ENCODE measurements at regions of chr5 and their contacts with region 1.

Region 1: GRCh38 chr5:60960591-60960990 is 15.6 kb downstream of the NDUFAF2 start:
- DNase-seq: no peak
- ATAC-seq: peak; percentile 38; the same call in 1 of the 3 replicates
- H3K4me3 ChIP-seq: no peak overlapping the region
- H3K27ac ChIP-seq: no peak overlapping the region
- H3K4me1 ChIP-seq: no peaks in the 10 kb centered on the region; the same call in 1 of the 2 replicates
- H3K27me3 ChIP-seq: no peaks in the 10 kb centered on the region
- CTCF ChIP-seq: peak; percentile 42 to 55 (median 48)
- EP300 ChIP-seq: no peak
- POLR2A ChIP-seq: no peak
- RAD21 ChIP-seq: peak; percentile 56

Region 2: DNA sequence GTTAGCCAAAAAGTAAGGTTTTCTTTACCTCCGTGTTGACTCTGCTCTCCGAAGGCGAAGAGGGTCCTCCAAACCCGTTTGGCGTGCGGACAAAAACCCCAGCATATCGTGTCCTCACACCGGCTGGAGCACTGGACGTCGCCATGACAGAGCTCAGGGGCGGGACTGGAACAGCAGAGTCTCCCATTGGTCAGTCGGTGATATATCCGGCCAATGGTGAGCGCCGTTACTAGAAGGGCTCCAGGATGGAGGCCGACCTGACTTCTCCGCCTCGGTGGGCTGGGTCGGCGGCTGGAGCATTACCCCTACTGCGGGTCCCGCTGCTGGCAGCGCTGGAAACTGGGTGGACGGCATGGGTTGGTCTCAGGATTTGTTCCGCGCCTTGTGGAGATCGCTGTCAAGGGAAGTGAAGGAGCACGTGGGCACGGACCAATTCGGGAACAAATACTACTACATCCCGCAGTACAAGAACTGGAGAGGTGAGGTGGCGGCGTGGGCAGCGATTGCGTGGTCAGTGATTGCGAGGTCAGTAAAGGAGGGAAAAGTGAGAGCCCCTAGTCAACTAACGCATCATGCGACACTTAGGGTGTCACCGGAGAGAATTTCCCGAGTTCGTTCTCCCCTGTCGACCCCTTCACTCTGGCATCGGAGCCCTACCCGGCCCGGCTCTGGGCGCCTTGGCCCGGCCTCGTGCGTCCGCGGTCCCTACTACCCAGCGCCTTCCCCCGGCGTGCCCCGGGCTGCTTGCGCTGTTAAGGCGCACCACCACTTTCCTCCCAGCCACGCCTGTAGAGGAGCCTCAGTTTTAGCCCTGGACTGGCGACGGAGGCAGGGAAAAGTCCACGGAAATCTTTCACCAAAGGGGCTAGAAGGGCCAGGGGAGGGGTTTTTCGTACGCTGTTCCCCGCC is 15.4 kb before region 1 on chr5 and contains the starts of genes ERCC8 and NDUFAF2:
- CTCF ChIA-PET with region 1: interaction called, 18 read pairs
- POLR2A ChIA-PET with region 1: no interaction called
- RAD21 ChIA-PET with region 1: interaction called, 6 read pairs
- SMC1A ChIA-PET with region 1: interaction called, 6 read pairs
- in situ Hi-C with region 1: no loop called
- intact Hi-C with region 1: no loop called
- DNase-seq: peak; percentile 73
- ATAC-seq: peak; percentile 98
- H3K4me3 ChIP-seq: peak within 1 kb of the TSS; percentile 98
- H3K27ac ChIP-seq: peak within 1 kb of the TSS; percentile 83
- H3K4me1 ChIP-seq: no peaks in the 10 kb centered on the region
- H3K27me3 ChIP-seq: no peaks in the 10 kb centered on the region
- CTCF ChIP-seq: no peak
- EP300 ChIP-seq: no peak
- POLR2A ChIP-seq: peak; percentile 78
- RAD21 ChIP-seq: no peak
- polyA plus RNA-seq, gene ERCC8: 16.8 to 31.2 TPM
- polyA plus RNA-seq, gene NDUFAF2: 111 to 121 TPM

Region 3: DNA sequence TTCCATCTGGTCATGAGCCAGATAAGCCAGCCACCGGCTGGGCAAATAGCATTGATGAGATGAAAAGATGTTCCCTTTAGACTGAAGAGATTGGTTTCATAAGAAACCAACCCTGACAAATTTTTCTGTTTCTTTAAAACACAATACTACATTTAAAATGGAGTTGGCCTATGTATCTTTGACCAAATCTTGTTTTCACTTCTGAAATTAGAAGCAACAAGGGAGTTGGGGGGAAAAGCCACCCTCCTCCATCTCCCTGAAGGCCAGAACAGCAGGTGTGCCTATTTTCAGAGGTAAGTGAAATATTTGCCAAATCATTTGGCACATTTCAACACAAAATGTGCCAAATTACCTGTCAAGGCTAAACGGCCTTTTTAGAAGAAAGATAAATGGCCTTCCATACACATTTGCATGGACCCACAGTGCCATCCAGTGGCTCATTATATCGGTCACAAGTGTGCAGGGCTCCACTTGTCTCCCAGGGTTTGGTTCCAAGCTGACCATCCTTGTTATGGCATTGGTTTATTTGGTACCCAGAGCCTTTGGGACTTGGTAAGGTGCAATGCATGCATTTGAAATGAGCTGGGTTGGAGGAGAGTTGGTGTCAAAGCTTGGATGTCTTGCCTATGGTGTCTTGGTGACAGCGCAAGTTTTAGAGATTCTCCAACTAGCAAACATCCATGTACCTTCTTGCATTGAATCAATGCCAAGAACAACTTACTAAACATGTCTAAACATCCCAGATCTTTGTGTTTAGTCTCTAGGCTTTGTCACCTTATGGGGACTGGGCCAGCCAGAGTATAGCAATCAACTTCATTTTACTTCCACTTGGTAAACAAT is 973.4 kb after region 1 on chr5:
- CTCF ChIA-PET with region 1: interaction called, 3 read pairs
- POLR2A ChIA-PET with region 1: no interaction called
- RAD21 ChIA-PET with region 1: interaction called, 3 read pairs
- SMC1A ChIA-PET with region 1: no interaction called
- in situ Hi-C with region 1: no loop called
- intact Hi-C with region 1: loop called (anchors 2 kb)
- DNase-seq: peak; percentile 7
- ATAC-seq: peak; percentile 83
- H3K4me3 ChIP-seq: no peak overlapping the region
- H3K27ac ChIP-seq: no peak overlapping the region
- H3K4me1 ChIP-seq: no peaks in the 10 kb centered on the region
- H3K27me3 ChIP-seq: no peaks in the 10 kb centered on the region
- CTCF ChIP-seq: peak; percentile 43 to 54 (median 52); a peak in 4 of 6 replicates
- EP300 ChIP-seq: no peak
- POLR2A ChIP-seq: no peak
- RAD21 ChIP-seq: peak; percentile 70